Activated CD4-positive, alpha-beta memory T cell treated with anti-CD3 and anti-CD28 coated beads for 36 hours (primary cell): ENCODE measurements at regions of chr16 and their contacts with region 1.

Region 1: DNA sequence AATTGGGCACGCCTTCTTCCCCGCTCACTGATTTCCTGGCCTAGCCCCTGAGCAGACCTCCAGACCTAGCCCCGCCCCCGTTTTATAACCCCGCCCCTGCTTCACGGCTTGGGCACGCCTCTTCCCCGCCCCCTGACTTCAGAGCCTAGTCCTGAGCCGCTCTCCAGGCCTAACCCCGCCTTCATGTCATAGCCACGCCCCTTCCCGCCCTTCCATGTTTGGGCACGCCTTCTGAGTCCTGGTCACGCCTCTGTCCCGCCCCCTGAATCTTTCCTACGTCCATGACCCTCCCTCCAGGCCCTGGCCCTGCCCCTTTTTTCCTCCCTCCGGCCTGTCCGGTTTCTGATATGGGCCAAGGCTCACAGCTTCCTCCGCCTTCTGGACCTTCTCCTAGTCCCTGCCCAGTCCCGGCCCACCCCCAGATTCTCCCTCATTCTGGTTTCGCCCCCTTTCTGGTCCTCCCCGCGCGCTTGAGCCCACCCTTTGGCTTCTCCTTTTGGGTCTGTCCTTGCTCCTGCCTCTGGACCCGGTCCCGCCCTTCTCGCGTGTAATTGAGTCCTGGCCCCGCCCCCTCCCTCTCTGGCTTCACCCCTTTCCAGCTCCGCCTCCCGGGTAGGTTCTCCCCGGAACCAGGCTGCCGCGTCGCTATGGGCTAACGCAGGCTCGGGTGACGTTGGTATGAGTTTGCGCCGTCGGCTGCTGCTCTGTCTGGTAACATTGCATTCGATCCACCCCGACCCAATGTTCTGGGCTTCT is 15.1 kb upstream of the EEF2K start:
- DNase-seq: peak; percentile 100
- H3K4me3 Mint-ChIP-seq: peak overlapping the region; percentile 91
- H3K27ac Mint-ChIP-seq: peak overlapping the region; percentile 99
- H3K4me1 Mint-ChIP-seq: peaks cover 58% of the 10 kb centered on the region
- H3K27me3 Mint-ChIP-seq: peaks cover 2% of the 10 kb centered on the region

Region 2: DNA sequence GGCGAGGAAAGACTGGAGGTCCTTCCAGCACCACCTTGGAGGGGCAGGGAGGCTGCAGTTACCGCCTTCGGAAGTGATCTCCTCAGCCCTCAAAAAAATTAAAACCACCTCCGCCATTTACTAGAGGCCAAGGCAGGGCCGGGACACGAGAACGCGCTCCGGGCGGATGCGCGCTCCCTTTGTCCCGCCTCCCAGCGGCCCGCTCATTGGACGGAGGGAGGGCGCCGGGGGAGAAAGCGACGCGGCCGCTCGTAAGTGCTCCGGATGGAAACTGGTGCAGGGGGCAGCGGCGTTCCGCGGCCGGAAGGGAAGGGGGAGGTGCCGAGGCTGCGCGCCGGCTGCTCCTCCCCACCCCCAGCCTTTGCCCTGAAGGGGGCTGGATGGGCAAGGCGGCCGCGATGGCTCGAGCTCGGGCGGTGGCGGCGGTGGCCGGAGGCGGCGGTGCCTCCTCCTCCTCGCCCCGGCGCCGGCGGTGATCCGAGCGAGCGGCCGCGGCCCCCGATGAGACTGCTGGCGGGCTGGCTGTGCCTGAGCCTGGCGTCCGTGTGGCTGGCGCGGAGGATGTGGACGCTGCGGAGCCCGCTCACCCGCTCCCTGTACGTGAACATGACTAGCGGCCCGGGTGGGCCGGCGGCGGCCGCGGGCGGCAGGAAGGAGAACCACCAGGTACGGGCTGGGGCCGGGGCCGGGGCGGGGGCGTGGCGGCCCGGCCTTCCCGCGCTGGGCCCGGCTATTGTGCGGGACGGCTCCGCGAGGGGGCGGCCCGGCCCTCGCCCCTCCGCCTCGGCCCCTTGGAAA is 591.5 kb before region 1 on chr16 and contains the start of gene METTL9:
- CTCF ChIA-PET with region 1: no interaction called
- POLR2A ChIA-PET with region 1: no interaction called
- intact Hi-C with region 1: loop called (anchors 5 kb)
- DNase-seq: peak; percentile 96
- H3K4me3 Mint-ChIP-seq: peak within 1 kb of the TSS; percentile 93
- H3K27ac Mint-ChIP-seq: peak within 1 kb of the TSS; percentile 92
- H3K4me1 Mint-ChIP-seq: peaks cover 57% of the 10 kb centered on the region
- H3K27me3 Mint-ChIP-seq: no peaks in the 10 kb centered on the region
- total RNA-seq, gene METTL9: 100 to 104 TPM

Region 3: DNA sequence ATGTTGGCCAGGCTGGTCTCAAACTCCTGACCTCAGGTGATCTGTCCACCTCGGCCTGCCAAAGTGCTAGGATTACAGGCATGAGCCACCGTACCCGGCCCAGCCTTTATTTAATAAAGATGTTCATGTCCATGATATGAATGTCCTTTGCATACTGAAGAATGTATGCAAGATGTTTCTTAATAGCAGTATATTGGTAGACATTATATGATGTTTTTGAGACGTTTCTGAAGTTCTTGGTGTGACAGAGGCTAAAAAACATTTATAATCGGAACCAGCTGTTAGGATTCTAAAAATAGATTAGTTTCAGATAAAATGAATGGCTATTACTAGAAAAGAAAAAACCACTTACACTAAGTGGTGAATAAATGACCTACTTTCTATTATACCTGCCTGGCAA is 201.8 kb before region 1 on chr16:
- CTCF ChIA-PET with region 1: interaction called, 14 read pairs
- POLR2A ChIA-PET with region 1: no interaction called
- intact Hi-C with region 1: no loop called
- DNase-seq: no peak
- H3K4me3 Mint-ChIP-seq: no peak overlapping the region
- H3K27ac Mint-ChIP-seq: no peak overlapping the region
- H3K4me1 Mint-ChIP-seq: peaks cover 12% of the 10 kb centered on the region
- H3K27me3 Mint-ChIP-seq: no peaks in the 10 kb centered on the region

Region 4: DNA sequence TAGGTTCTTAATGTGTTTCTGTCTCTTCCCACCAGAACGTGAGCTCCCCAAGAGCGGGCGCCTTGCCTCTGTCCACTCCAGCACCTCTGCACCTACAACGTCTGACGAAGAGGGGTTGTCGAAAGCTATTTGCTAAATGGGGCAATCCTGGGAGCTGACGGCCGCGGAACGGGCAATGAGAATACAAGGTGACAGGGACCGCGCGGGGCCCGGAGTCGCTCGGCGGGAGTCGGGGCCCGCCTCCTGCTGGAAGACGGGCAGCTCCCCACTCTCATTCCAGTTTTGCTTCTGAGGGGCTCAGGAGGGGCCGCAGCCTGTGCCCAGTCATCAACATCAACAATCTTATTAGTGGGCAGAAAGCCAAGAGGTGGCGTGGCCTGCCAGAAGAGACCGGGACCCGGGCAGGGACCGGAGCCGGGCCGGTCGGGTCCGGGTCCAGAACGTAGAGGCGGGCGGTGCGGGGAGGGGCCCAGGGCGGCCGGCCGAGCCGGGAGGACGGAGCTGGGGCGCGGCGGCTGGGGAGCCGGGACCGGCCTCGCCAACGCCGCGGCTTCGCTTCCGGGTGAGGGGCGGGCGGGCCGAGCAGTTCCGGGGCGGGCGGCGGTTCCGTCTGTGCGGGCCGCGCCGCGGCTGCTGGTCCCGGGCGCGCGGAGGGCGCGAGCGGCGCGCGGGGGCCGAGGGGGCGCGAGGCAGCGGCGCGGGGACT is 183.3 kb before region 1 on chr16 and contains the start of gene MOSMO:
- CTCF ChIA-PET with region 1: interaction called, 68 read pairs
- POLR2A ChIA-PET with region 1: interaction called, 6 read pairs
- intact Hi-C with region 1: loop called (anchors 2 kb)
- DNase-seq: peak; percentile 74
- H3K4me3 Mint-ChIP-seq: peak within 1 kb of the TSS; percentile 84
- H3K27ac Mint-ChIP-seq: peak within 1 kb of the TSS; percentile 46
- H3K4me1 Mint-ChIP-seq: peaks cover 41% of the 10 kb centered on the region
- H3K27me3 Mint-ChIP-seq: no peaks in the 10 kb centered on the region
- total RNA-seq, gene MOSMO: 8.1 to 9.6 TPM

Region 5: GRCh38 chr16:22098405-22099255 is 92.3 kb before region 1 on chr16:
- CTCF ChIA-PET with region 1: interaction called, 44 read pairs
- POLR2A ChIA-PET with region 1: no interaction called
- intact Hi-C with region 1: loop called (anchors 2 kb)
- DNase-seq: no peak
- H3K4me3 Mint-ChIP-seq: no peak overlapping the region
- H3K27ac Mint-ChIP-seq: no peak overlapping the region
- H3K4me1 Mint-ChIP-seq: no peaks in the 10 kb centered on the region
- H3K27me3 Mint-ChIP-seq: peaks cover 15% of the 10 kb centered on the region

Region 6: DNA sequence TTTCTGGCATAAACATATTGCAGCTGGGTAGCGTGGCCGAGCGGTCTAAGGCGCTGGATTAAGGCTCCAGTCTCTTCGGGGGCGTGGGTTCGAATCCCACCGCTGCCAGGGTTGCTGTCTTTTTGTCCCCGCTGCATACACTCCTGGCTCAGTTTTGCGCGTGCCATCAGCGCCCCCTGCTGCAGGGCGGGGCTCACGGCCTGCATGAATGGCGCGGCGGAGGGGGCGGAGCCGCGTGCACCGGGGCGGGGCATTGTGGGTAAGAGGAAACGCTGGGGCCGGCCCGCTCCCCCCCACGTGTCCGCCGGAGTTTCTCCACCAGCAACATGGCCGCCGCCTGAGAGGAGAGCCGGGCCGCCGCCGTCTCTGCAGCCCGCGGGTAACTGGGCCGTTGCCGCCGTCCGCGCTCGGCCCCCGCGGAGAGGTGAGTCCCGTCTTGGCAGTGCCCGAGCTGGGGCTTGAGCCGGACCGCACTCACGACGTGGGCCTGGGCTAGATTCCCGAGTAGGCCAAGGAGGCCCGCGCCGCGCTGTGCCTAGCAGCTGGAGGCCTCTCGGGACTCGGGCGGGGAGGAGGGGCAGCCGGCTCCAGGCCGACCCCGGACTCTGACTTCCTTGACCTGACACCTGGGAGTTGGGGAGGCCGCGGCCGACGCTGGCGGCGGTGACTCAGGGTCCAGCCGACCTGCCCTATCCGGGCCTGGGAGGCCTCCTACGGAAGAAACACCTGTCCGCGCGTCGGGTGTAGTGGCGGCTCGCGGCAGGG is 106.3 kb after region 1 on chr16 and contains the start of gene POLR3E:
- CTCF ChIA-PET with region 1: interaction called, 29 read pairs
- POLR2A ChIA-PET with region 1: interaction called, 29 read pairs
- intact Hi-C with region 1: loop called (anchors 1 kb)
- DNase-seq: peak; percentile 100
- H3K4me3 Mint-ChIP-seq: peak within 1 kb of the TSS; percentile 94
- H3K27ac Mint-ChIP-seq: peak within 1 kb of the TSS; percentile 97
- H3K4me1 Mint-ChIP-seq: peaks cover 40% of the 10 kb centered on the region
- H3K27me3 Mint-ChIP-seq: peaks cover 1% of the 10 kb centered on the region
- total RNA-seq, gene POLR3E: 75.0 to 80.3 TPM